Panc1 (cell line): ENCODE measurements at regions of chr13 and their contacts with region 1.

Region 1: DNA sequence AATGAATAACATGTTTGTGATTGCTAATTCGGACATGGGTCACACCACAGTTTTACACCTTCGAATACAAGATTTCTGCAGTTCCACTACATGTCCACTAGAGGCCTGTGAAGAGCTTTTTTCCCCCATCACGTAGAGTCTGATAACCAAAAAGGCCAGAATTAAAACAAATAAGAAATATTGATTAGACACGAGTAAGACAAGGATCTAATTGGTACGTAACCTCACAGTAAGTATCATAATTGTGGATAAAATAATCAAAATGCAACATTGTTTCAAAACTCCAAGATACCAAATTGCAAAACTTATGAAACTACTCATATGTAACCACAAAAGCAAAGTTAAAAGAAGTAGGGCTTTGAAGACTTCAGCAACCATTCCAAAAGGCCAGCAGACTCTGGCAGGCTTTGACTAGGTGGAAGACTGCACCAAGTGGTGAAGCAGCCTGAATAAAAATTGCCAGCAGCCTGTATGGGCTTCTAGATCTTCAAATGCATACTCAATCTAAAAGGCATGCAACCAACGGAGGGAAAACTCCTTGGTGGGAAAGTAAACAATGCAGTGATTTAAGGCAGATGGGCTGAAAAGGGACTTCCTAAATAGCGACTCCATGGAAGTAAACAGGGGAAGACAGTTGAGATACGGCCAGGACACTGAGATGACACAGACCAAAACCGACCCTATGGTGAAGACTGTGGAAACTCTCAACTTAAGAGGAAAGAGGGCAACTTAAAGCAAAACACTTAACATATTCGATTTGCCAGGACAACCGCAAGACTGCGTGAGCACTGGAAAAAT is 56.7 kb downstream of the STARD13 start:
- DNase-seq: no peak
- ATAC-seq: peak; percentile 75; the same call in 1 of the 2 replicates
- H3K4me3 ChIP-seq: no peak overlapping the region
- H3K27ac ChIP-seq: peak overlapping the region; percentile 35
- H3K4me1 ChIP-seq: peaks cover 17% of the 10 kb centered on the region
- H3K27me3 ChIP-seq: no peaks in the 10 kb centered on the region
- CTCF ChIP-seq: peak; percentile 80

Region 2: DNA sequence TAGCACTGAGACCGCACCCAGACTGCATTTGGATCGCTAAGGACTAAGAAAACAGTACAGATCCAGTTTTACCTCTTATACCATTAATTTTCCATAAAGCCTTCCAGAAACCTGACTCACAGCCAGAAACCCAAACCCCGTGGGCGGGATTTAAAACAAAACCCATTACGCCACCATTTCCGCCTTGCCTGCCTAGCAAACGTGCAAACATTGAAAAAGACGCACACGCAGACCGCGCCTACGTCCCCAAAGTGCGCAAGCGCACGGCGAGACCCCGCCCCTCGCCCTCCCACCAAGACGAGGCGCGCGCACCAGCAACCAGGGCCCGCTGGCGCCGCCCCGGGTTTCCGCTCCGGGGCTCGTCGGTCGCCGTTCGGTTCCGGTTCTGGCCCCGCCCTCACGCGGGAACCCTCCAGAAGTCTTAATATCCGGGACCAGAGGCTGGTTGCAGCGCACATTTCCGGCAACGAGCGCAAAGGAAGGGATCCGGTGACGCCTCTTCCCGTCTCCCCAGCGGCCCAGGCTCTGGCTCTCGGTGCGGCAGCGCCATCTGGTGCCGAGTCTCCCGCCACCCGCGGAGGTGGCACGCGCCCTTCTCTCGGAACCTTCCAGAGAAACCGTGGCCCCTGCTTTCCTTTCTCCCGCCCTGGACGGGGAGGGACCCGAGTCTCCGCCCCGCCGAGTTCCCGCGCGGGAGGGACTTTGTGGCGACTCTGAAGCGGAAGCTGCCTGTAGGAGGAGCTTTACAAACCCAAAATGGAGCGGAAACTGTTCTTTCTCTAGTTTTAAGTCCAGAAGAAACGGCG is 313.6 kb after region 1 on chr13:
- CTCF ChIA-PET with region 1: no interaction called
- POLR2A ChIA-PET with region 1: no interaction called
- in situ Hi-C with region 1: no loop called
- intact Hi-C with region 1: loop called (anchors 5 kb)
- DNase-seq: peak; percentile 82
- ATAC-seq: peak; percentile 96
- H3K4me3 ChIP-seq: peak overlapping the region; percentile 67 to 78
- H3K27ac ChIP-seq: peak overlapping the region; percentile 100
- H3K4me1 ChIP-seq: peaks cover 11% of the 10 kb centered on the region
- H3K27me3 ChIP-seq: no peaks in the 10 kb centered on the region
- CTCF ChIP-seq: peak; percentile 89